ENCODE measurements at regions of chr2 and their contacts with region 1.

Region 1: GRCh38 chr2:133674433-133675331 is 106.4 kb upstream of the NCKAP5 start:
- DNase-seq: peak; percentile 25 to 43
- ATAC-seq: peak; percentile 42 to 76 (median 66)
- H3K4me3 ChIP-seq: peak overlapping the region in 9 of 10 donors; percentile 4 to 48 (median 31)
- H3K27ac ChIP-seq: peak overlapping the region; percentile 4 to 82 (median 75)
- H3K4me1 ChIP-seq: peaks cover 2 to 38% (median 20%) of the 10 kb centered on the region in 9 donors
- H3K27me3 ChIP-seq: no peaks in the 10 kb centered on the region
- CTCF ChIP-seq: no peak

Region 2: GRCh38 chr2:133586978-133587377 is 87.7 kb before region 1 on chr2:
- intact Hi-C with region 1: loop called in 1 of 10 experiments (anchors 2 kb)
- DNase-seq: no peak
- ATAC-seq: peak in 5 of 8 donors; percentile 37 to 66 (median 59)
- H3K4me3 ChIP-seq: no peak overlapping the region
- H3K27ac ChIP-seq: peak overlapping the region in 4 of 10 donors; percentile 8 to 47 (median 28)
- H3K4me1 ChIP-seq: peaks cover 0 to 38% (median 8%) of the 10 kb centered on the region in 9 donors
- H3K27me3 ChIP-seq: no peaks in the 10 kb centered on the region
- CTCF ChIP-seq: no peak

Region 3: GRCh38 chr2:133635131-133635530 is 39.6 kb before region 1 on chr2:
- intact Hi-C with region 1: loop called in 1 of 10 experiments (anchors 5 kb)
- DNase-seq: no peak
- ATAC-seq: peak in 1 of 8 donors; percentile 34
- H3K4me3 ChIP-seq: no peak overlapping the region
- H3K27ac ChIP-seq: no peak overlapping the region
- H3K4me1 ChIP-seq: peaks cover 0 to 12% (median 4%) of the 10 kb centered on the region in 9 donors
- H3K27me3 ChIP-seq: no peaks in the 10 kb centered on the region
- CTCF ChIP-seq: no peak

Region 4: GRCh38 chr2:133755480-133756300 is 81.0 kb after region 1 on chr2:
- intact Hi-C with region 1: loop called in 1 of 10 experiments (anchors 5 kb)
- DNase-seq: peak in 1 of 2 donors; percentile 32
- ATAC-seq: peak; percentile 75 to 93 (median 88)
- H3K4me3 ChIP-seq: no peak overlapping the region
- H3K27ac ChIP-seq: peak overlapping the region in 9 of 10 donors; percentile 32 to 77 (median 53)
- H3K4me1 ChIP-seq: peaks cover 0 to 24% (median 6%) of the 10 kb centered on the region in 9 donors
- H3K27me3 ChIP-seq: no peaks in the 10 kb centered on the region
- CTCF ChIP-seq: no peak

Region 5: GRCh38 chr2:133765658-133766057 is 91.0 kb after region 1 on chr2:
- intact Hi-C with region 1: loop called in 2 of 10 experiments (anchors 5 to 10 kb)
- DNase-seq: peak in 1 of 2 donors; percentile 52
- ATAC-seq: peak; percentile 72 to 97 (median 90)
- H3K4me3 ChIP-seq: no peak overlapping the region
- H3K27ac ChIP-seq: peak overlapping the region in 8 of 10 donors; percentile 1 to 79 (median 66)
- H3K4me1 ChIP-seq: peaks cover 0 to 28% (median 9%) of the 10 kb centered on the region in 9 donors
- H3K27me3 ChIP-seq: no peaks in the 10 kb centered on the region
- CTCF ChIP-seq: no peak